Activated T-helper 2 cell treated with anti-CD3 and anti-CD28 coated beads, Interferon-gamma antibody, Interleukin-2, Interleukin-4, amounts not matched to agents 10 μg/mL and 5 μg/mL and 100 μg/mL, durations not matched to agents 14 hours and 24 hours and 36 hours (primary cell): ENCODE measurements at regions of chr1 and their contacts with region 1.

Region 1: GRCh38 chr1:147599362-147600118 is 58.2 kb downstream of the BCL9 start:
- DNase-seq: peak; percentile 89
- H3K4me3 Mint-ChIP-seq: peak overlapping the region; percentile 92
- H3K27ac Mint-ChIP-seq: peak overlapping the region; percentile 81
- H3K4me1 Mint-ChIP-seq: peaks cover 35% of the 10 kb centered on the region
- H3K27me3 Mint-ChIP-seq: peaks cover 8% of the 10 kb centered on the region

Region 2: DNA sequence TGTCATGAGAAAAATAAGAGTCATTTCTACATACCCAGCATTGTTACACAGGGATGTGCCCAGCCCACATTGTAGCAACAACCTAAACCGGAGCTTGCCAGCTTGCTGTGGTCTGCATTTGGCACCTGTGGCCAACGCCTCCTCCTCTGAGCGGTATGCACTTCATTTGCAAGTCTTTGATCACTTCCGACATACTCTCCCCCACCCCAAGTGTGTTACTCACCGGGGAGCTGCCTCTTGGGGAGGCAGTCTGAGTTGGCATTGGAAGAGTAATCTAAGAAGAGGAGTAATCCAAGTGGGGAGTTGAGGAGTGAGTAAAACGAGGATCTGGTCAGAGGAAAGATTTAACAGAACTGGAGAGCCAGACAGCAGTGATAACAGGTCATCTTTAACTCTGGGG is 54.4 kb before region 1 on chr1:
- intact Hi-C with region 1: loop called (anchors 1 kb)
- DNase-seq: peak; percentile 68
- H3K4me3 Mint-ChIP-seq: peak overlapping the region; percentile 38
- H3K27ac Mint-ChIP-seq: peak overlapping the region; percentile 75
- H3K4me1 Mint-ChIP-seq: peaks cover 57% of the 10 kb centered on the region
- H3K27me3 Mint-ChIP-seq: no peaks in the 10 kb centered on the region

Region 3: GRCh38 chr1:147579934-147580537 is 19.5 kb before region 1 on chr1:
- intact Hi-C with region 1: loop called (anchors 2 kb)
- DNase-seq: no peak
- H3K4me3 Mint-ChIP-seq: peak overlapping the region; percentile 28
- H3K27ac Mint-ChIP-seq: peak overlapping the region; percentile 58
- H3K4me1 Mint-ChIP-seq: peaks cover 29% of the 10 kb centered on the region
- H3K27me3 Mint-ChIP-seq: peaks cover 32% of the 10 kb centered on the region

Region 4: DNA sequence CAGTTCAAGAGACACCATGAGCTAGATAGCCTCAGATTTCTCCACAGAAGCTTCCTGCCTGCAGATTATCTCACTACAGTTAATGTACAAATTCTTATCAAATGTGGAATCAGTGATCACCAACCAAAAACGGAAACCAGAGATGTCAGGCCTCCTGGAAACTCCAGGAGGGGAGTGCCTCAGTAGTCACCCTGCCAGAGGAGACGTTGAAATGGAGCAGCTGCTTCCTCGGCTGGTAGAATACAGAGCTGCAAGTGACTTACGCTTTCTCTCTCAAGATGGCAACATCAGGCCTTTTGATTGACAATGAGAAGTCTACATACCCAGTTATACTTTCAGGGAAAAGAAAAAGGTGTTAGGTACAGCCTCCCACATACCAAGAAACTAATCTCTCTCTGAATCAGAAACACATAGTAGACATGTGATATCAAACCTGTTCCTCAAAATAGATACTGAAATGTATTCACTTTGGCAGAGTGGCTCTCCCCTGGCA is 18.6 kb after region 1 on chr1:
- intact Hi-C with region 1: loop called (anchors 1 kb)
- DNase-seq: peak; percentile 74
- H3K4me3 Mint-ChIP-seq: peak overlapping the region; percentile 48
- H3K27ac Mint-ChIP-seq: peak overlapping the region; percentile 85
- H3K4me1 Mint-ChIP-seq: peaks cover 43% of the 10 kb centered on the region
- H3K27me3 Mint-ChIP-seq: no peaks in the 10 kb centered on the region

Region 5: GRCh38 chr1:147627435-147628110 is 28.0 kb after region 1 on chr1:
- intact Hi-C with region 1: loop called (anchors 2 kb)
- DNase-seq: peak; percentile 37
- H3K4me3 Mint-ChIP-seq: no peak overlapping the region
- H3K27ac Mint-ChIP-seq: no peak overlapping the region
- H3K4me1 Mint-ChIP-seq: peaks cover 30% of the 10 kb centered on the region
- H3K27me3 Mint-ChIP-seq: no peaks in the 10 kb centered on the region

Region 6: DNA sequence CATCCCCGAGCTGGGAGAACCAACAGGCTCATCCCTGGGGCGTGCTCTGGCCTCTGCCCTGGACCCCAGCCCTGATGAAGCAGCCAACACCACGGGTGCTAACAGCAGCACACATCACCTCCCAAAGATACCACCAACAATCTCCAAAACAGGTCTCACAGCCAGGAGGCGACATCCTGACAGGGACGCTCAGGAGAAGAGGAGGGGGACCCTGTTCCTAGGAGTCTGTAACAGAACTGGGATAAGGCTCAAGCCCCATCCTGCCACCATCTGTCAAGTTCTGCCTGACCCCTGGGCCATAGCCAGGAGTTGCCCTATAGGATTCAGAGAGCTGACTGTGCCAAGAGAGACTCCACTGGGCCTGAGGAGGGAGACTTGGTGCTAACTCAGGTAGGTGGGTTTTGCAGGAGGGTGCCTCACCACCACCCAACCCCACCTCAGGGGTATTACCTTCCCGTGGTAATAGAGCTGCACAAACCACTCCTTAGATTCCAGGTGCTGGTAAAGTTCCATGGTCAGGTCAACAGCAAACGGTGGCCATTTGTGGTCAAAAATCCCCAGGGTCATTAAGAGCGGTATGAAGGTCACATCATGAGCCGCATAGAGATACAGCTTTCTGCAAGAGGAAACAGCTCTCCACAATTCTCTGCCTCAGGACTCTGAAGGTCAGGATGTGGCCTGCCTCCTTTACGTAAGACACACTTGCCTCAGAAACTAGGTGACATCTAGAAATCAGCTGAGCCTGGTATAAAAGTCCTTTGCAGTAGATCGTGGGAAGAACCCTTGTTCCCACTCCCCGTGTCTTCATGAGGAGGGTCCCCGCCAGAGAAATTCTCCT is 48.5 kb after region 1 on chr1:
- intact Hi-C with region 1: loop called (anchors 5 kb)
- DNase-seq: no peak
- H3K4me3 Mint-ChIP-seq: peak overlapping the region; percentile 65
- H3K27ac Mint-ChIP-seq: peak overlapping the region; percentile 73
- H3K4me1 Mint-ChIP-seq: peaks cover 60% of the 10 kb centered on the region
- H3K27me3 Mint-ChIP-seq: no peaks in the 10 kb centered on the region

Region 7: DNA sequence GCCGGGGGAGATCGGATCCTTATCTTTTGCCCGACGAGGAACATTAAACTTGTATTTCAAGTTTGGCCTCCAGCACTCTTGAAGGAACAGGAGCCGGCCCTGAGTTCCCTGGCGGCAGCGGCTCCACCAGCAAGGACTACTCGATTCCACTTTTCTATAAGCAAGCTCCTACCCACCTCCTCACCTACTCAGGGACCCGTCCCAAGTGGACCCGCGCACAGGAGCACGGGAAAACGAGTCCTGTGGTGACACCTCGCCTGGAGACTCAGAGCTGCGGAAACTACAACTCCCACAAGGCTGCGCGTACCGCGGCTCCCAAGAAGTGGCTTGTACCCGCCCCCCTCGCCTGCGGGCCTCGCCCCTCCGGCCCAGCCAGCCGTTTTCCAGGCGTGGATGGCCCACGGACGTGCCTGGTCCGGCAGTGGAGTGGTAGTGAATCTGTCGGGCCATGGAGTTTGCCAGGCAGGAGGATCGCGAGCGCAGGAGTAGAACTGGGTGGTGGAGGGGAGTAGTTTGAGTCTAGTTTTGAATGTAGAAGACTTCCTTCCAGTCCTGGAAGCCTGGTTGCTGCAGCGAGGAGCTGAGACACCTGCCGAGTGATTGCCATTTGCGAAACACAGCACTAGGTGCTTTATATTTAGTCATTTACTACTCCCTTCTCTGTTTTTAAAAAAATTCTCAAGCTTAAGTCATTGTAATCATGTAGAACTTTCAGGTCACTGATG is 70.9 kb after region 1 on chr1 and contains the start of gene ACP6:
- intact Hi-C with region 1: loop called (anchors 2 kb)
- DNase-seq: peak; percentile 82
- H3K4me3 Mint-ChIP-seq: peak within 1 kb of the TSS; percentile 92
- H3K27ac Mint-ChIP-seq: peak within 1 kb of the TSS; percentile 78
- H3K4me1 Mint-ChIP-seq: peaks cover 15% of the 10 kb centered on the region
- H3K27me3 Mint-ChIP-seq: peaks cover 25% of the 10 kb centered on the region
- total RNA-seq, gene ACP6: 11.6 and 13.4 TPM in 2 replicates

Region 8: GRCh38 chr1:147700042-147701006 is 100.8 kb after region 1 on chr1:
- intact Hi-C with region 1: no loop called
- DNase-seq: peak; percentile 46
- H3K4me3 Mint-ChIP-seq: no peak overlapping the region
- H3K27ac Mint-ChIP-seq: no peak overlapping the region
- H3K4me1 Mint-ChIP-seq: peaks cover 5% of the 10 kb centered on the region
- H3K27me3 Mint-ChIP-seq: peaks cover 34% of the 10 kb centered on the region